Activated CD8-positive, alpha-beta T cell treated with anti-CD3 and anti-CD28 coated beads, Interleukin-2, amount 10 ng/mL, durations not matched to agents 7 days and 5 days (primary cell): ENCODE measurements at regions of chr10 and their contacts with region 1.

Region 1: GRCh38 chr10:61896854-61897661 is 4.4 kb upstream of the ARID5B start:
- DNase-seq: peak; percentile 82
- ATAC-seq: peak; percentile 72
- H3K4me3 Mint-ChIP-seq: peak overlapping the region; percentile 71
- H3K27ac Mint-ChIP-seq: peak overlapping the region; percentile 88
- H3K4me1 Mint-ChIP-seq: peaks cover 34% of the 10 kb centered on the region
- H3K27me3 Mint-ChIP-seq: no peaks in the 10 kb centered on the region

Region 2: DNA sequence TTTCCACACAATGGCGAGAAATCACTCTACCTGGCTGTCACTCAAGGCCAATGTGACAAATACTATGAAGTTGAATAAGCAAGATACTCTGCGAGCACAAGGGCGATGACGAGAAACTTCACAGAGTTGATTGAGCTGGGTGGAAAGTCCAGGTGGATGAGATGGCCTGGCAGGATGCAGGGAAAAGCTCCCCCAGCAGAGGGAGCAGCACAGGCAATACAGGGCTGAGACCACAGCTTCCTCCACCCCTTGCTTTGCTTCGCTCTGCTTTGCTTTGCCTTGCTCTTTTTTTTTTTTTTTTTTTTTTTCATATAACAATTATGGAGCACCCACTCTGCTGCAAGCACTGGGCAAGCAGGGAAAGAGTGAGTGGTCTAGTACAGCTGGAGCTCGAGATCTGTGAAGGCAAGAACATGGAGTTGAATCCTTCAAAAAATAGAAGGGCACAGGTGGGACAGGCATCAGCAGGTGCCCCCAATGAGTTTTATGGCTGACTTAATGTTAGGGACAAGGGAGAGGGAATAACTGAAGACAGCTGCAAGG is 146.1 kb before region 1 on chr10:
- CTCF ChIA-PET with region 1: interaction called, 12 read pairs
- POLR2A ChIA-PET with region 1: interaction called, 3 read pairs
- DNase-seq: peak; percentile 82
- ATAC-seq: peak; percentile 88
- H3K4me3 Mint-ChIP-seq: peak overlapping the region; percentile 18
- H3K27ac Mint-ChIP-seq: peak overlapping the region; percentile 85
- H3K4me1 Mint-ChIP-seq: peaks cover 29% of the 10 kb centered on the region
- H3K27me3 Mint-ChIP-seq: no peaks in the 10 kb centered on the region

Region 3: GRCh38 chr10:61943674-61944410 is 46.8 kb after region 1 on chr10:
- CTCF ChIA-PET with region 1: interaction called, 29 read pairs
- POLR2A ChIA-PET with region 1: interaction called, 53 read pairs
- DNase-seq: no peak
- ATAC-seq: peak; percentile 29
- H3K4me3 Mint-ChIP-seq: peak overlapping the region; percentile 69
- H3K27ac Mint-ChIP-seq: peak overlapping the region; percentile 81
- H3K4me1 Mint-ChIP-seq: peaks cover 57% of the 10 kb centered on the region
- H3K27me3 Mint-ChIP-seq: no peaks in the 10 kb centered on the region

Region 4: GRCh38 chr10:61987951-61988379 is 90.9 kb after region 1 on chr10:
- CTCF ChIA-PET with region 1: interaction called, 20 read pairs
- POLR2A ChIA-PET with region 1: interaction called, 58 read pairs
- DNase-seq: peak; percentile 42
- ATAC-seq: peak; percentile 91
- H3K4me3 Mint-ChIP-seq: peak overlapping the region; percentile 56
- H3K27ac Mint-ChIP-seq: peak overlapping the region; percentile 88
- H3K4me1 Mint-ChIP-seq: peaks cover 56% of the 10 kb centered on the region
- H3K27me3 Mint-ChIP-seq: no peaks in the 10 kb centered on the region

Region 5: GRCh38 chr10:62050893-62051433 is 153.9 kb after region 1 on chr10:
- CTCF ChIA-PET with region 1: interaction called, 13 read pairs
- POLR2A ChIA-PET with region 1: interaction called, 117 read pairs
- DNase-seq: peak; percentile 75
- ATAC-seq: peak; percentile 47
- H3K4me3 Mint-ChIP-seq: peak overlapping the region; percentile 77
- H3K27ac Mint-ChIP-seq: peak overlapping the region; percentile 95
- H3K4me1 Mint-ChIP-seq: peaks cover 99% of the 10 kb centered on the region
- H3K27me3 Mint-ChIP-seq: no peaks in the 10 kb centered on the region